ENCODE measurements at regions of chr1 and their contacts with region 1.

Region 1: DNA sequence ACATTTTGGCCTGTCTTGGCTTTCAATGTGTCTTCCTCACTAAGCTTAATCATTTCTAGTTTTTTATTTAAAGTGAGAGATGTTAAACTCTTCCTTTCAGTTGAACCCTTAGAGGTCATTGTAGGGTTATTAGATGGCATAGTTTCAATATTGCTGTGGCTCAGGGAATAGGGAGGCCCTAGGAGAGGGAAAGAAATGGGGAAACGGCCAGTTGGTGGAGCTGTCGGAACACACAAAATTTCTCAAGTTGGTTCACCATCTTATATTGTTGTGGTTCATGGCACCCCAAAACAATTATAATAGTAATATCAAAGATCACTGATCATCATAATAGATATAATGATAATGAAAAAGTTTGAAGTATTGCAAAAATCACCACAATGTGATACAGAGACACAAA is 31.4 kb upstream of the KAZN start:
- DNase-seq: peak; percentile 25
- H3K4me3 ChIP-seq: no peak overlapping the region
- H3K27ac ChIP-seq: no peak overlapping the region
- H3K4me1 ChIP-seq: peaks cover 7% of the 10 kb centered on the region
- CTCF ChIP-seq: peak; percentile 73

Region 2: DNA sequence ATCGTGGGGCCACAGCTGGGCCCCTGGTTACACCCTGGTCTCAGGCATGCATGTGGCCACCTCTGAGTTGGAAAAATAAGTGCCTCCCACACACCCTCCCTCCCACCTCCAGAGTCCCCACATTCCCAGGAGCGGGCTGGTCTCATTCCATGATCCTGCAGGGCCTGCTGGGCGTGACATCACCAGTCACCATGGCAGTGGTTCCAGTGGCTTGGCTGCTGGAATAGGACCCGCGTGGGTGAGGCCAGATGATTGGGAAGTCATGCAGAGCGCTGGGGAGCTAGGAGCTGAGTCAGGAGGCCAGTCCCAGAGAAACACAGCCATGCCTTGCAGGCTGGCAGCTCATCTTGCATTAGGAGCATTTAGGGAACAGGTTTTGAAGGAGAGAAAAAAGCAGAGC is 461.0 kb after region 1 on chr1:
- CTCF ChIA-PET with region 1: no interaction called
- POLR2A ChIA-PET with region 1: no interaction called
- intact Hi-C with region 1: loop called (anchors 10 kb)
- DNase-seq: no peak
- H3K4me3 ChIP-seq: no peak overlapping the region
- H3K27ac ChIP-seq: no peak overlapping the region
- H3K4me1 ChIP-seq: peaks cover 2% of the 10 kb centered on the region
- CTCF ChIP-seq: no peak

Region 3: DNA sequence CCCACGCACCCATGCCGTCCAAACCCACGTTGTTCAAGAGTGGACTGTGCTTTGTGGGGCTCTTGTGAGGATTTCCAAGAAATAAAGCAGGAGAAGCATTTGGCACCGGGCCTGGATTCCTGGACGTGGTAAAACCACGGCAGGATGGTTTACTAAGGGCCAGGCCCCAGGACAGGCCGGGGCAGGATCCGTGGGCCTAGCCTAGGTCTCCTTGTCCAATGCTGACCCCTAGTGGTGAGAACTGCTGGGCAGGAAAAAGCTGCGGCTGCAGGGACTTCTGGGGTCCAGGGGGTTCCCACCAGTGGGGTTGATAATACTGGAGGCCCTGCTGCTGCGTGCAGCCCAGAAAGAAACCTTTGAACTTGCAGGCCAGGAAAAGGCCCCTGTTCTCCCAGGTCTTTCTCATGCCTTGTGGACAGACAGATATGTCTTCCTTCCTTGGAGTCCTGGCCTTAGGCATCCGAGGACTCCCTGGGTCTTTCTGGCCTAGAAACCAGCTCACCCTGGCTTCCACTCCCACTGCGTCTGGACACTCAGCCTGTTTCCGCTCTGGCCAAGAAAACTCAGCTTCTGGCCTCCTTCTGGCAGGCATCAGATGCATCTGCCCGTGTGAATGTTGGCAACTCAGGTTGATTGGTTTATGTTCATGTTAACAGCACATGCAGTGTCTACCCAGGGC is 479.6 kb after region 1 on chr1:
- CTCF ChIA-PET with region 1: no interaction called
- POLR2A ChIA-PET with region 1: no interaction called
- intact Hi-C with region 1: loop called (anchors 5 kb)
- DNase-seq: peak; percentile 72
- H3K4me3 ChIP-seq: no peak overlapping the region
- H3K27ac ChIP-seq: no peak overlapping the region
- H3K4me1 ChIP-seq: no peaks in the 10 kb centered on the region
- CTCF ChIP-seq: peak; percentile 91

Region 4: GRCh38 chr1:15430787-15431570 is 863.9 kb after region 1 on chr1:
- CTCF ChIA-PET with region 1: no interaction called
- POLR2A ChIA-PET with region 1: no interaction called
- intact Hi-C with region 1: no loop called
- DNase-seq: peak; percentile 55
- H3K4me3 ChIP-seq: no peak overlapping the region
- H3K27ac ChIP-seq: no peak overlapping the region
- H3K4me1 ChIP-seq: no peaks in the 10 kb centered on the region
- CTCF ChIP-seq: peak; percentile 96

Measured in OCI-LY7 (cell line).